ENCODE measurements at regions of chr7 and their contacts with region 1.

Region 1: GRCh38 chr7:7595451-7595850 is 28.8 kb downstream of the MIOS start:
- DNase-seq: no peak
- H3K4me3 Mint-ChIP-seq: no peak overlapping the region
- H3K27ac Mint-ChIP-seq: no peak overlapping the region
- H3K4me1 Mint-ChIP-seq: peaks cover 3% of the 10 kb centered on the region
- H3K27me3 Mint-ChIP-seq: no peaks in the 10 kb centered on the region

Region 2: DNA sequence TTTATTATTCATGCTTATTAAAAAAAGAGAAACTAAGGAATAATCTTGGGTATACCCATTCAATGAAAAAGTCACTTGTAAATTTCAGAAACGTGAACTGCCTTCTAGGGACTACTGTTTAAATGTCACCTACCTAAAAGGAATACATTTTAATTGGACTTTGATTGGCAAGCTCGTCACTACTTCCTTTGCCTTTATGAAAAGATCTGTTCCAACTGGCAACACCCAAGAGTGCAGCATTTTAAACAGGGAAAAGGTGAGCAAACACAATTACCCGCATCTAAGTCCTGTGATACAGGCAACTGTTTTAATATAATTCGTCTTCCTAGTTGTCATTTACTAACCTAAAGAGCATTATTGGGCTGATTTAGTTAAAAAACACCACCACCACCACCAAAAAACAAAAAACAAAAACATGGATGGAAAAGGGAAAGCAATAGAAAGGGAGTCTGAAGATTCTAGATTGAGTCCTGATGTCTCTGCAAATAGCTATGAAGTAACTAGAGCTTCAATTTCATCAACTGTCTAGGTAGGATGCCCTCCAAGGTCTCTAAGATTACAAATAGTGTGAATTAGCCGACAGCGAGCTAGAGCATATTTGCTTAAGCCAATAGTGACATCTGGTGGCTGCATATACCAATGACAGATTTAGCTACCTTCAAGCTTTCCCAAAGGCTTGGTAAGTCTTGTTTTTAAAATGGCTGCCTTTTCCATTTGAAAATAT is 700.3 kb after region 1 on chr7:
- intact Hi-C with region 1: loop called (anchors 5 kb)
- DNase-seq: peak; percentile 80
- H3K4me3 Mint-ChIP-seq: no peak overlapping the region
- H3K27ac Mint-ChIP-seq: no peak overlapping the region
- H3K4me1 Mint-ChIP-seq: peaks cover 3% of the 10 kb centered on the region
- H3K27me3 Mint-ChIP-seq: peaks cover 28% of the 10 kb centered on the region

Region 3: GRCh38 chr7:8710124-8710523 is 1114.7 kb after region 1 on chr7:
- intact Hi-C with region 1: no loop called
- DNase-seq: no peak
- H3K4me3 Mint-ChIP-seq: no peak overlapping the region
- H3K27ac Mint-ChIP-seq: no peak overlapping the region
- H3K4me1 Mint-ChIP-seq: no peaks in the 10 kb centered on the region
- H3K27me3 Mint-ChIP-seq: no peaks in the 10 kb centered on the region